ENCODE measurements at regions of chr1 and their contacts with region 1.

Region 1: DNA sequence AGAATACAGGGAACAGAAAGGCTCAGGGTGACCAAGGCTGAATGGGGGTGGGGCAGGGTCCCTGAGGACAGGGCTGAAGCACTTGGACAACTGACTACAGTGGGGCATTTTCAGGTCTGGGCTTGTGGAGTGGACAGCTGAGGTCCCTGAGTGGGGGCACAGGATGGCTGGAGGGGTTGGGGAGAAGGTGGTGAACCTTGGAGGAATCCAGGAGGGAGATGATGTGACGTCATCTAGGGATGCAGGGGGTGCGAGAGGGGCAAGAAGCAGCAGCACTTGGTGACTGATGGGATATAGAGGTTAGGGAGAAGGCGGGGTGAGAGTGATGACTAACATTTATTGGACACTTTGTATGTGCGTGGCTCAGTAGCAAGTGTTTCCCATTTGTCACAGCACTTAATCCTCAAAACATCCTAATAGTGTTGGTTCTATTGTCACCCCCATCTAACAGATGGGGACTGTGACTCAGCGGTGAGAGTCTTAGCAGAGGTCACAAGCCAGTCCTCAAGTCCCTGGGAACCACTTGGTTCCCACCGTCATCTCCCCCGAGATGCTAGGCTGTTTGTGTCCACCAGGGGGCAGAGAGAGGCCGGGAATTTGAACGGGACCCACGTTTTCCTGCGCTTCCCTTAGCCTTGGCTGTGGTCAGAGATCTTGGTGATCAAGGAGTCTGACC is 27.9 kb upstream of the BMP8B start:
- DNase-seq: no peak
- H3K4me3 ChIP-seq: no peak overlapping the region
- H3K27ac ChIP-seq: no peak overlapping the region
- H3K4me1 ChIP-seq: peaks cover 0 to 5% (median 0%) of the 10 kb centered on the region in 4 donors
- H3K27me3 ChIP-seq: peaks cover 0 to 32% (median 0%) of the 10 kb centered on the region in 4 donors
- CTCF ChIP-seq: peak; percentile 82 to 94 (median 87)
- EP300 ChIP-seq: no peak
- POLR2A ChIP-seq: no peak

Region 2: GRCh38 chr1:39683591-39684312 is 132.8 kb before region 1 on chr1:
- intact Hi-C with region 1: no loop called
- DNase-seq: no peak
- H3K4me3 ChIP-seq: peak overlapping the region in 2 of 4 donors; percentile 24 to 30
- H3K27ac ChIP-seq: no peak overlapping the region
- H3K4me1 ChIP-seq: no peaks in the 10 kb centered on the region
- H3K27me3 ChIP-seq: peaks cover 0 to 77% (median 5%) of the 10 kb centered on the region in 4 donors
- CTCF ChIP-seq: no peak
- EP300 ChIP-seq: no peak
- POLR2A ChIP-seq: no peak

Region 3: GRCh38 chr1:39901698-39902459 is 85.3 kb after region 1 on chr1 and contains the start of gene MYCL:
- intact Hi-C with region 1: loop called (anchors 1 kb)
- DNase-seq: no peak
- H3K4me3 ChIP-seq: peak within 1 kb of the TSS; percentile 65 to 79 (median 67)
- H3K27ac ChIP-seq: peak within 1 kb of the TSS in 1 of 4 donors; percentile 53
- H3K4me1 ChIP-seq: peaks cover 12 to 25% (median 21%) of the 10 kb centered on the region in 4 donors
- H3K27me3 ChIP-seq: peaks cover 0 to 53% (median 2%) of the 10 kb centered on the region in 4 donors
- CTCF ChIP-seq: peak; percentile 60 to 69 (median 69)
- EP300 ChIP-seq: no peak
- POLR2A ChIP-seq: no peak
- total RNA-seq, gene MYCL: 0.13 to 0.92 (median 0.66) TPM